ENCODE measurements at regions of chr17 and their contacts with region 1.

Region 1: DNA sequence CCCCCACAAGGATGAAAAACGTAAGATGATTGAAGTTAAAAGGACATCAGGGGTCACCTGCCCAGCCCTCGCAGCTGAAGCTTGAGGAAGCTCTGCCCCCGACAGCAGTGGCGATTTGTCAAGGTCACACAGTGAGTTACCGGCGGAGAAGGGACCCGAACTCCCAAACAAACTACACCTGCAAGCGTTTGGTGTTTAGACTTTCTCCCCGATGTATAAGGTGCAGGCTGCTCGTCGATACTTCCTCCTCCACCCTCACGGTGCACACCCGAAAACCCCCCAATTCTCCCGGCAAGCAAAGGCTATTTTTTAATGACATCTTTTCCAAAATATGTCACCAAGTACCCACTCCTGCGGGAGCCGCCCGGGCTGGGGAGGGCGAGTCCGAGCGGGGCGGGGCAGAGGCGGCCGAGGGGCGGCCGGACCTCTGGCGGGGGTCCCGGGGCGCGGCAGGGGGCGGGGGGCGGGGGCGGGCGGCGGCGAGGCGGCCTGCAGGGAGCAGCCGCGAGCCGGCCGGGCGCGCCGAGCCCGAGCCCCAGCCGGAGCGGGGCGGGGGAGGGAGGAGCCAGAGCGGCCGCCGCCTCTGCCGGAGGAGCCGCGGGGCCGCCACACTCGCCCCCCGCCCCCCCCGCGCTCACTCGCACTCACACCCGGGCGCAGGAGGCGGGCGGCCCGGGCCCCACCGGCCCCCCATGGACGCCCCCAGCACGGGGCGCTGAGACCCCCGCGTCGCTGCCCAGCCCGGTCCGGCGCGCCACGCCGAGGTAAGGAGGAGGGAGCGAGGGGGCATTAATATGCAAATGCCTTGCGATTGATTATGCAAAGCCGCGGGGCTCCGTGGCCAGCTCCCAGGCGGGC is at the start of gene THRA:
- DNase-seq: peak; percentile 71 to 75 (median 73)
- H3K4me3 ChIP-seq: peak within 1 kb of the TSS; percentile 57 to 70
- H3K4me3 Mint-ChIP-seq: peak within 1 kb of the TSS; percentile 90 to 96 (median 94)
- H3K27ac ChIP-seq: peak within 1 kb of the TSS; percentile 70
- H3K27ac Mint-ChIP-seq: peak within 1 kb of the TSS; percentile 81 to 96 (median 91)
- H3K4me1 ChIP-seq: peaks cover 49% of the 10 kb centered on the region
- H3K4me1 Mint-ChIP-seq: peaks cover 33 to 53% (median 42%) of the 10 kb centered on the region in 4 donors
- H3K27me3 ChIP-seq: peaks cover 3% of the 10 kb centered on the region
- H3K27me3 Mint-ChIP-seq: peaks cover 1% of the 10 kb centered on the region in 2 donors
- total RNA-seq, gene THRA: 35.9 to 41.3 TPM

Region 2: DNA sequence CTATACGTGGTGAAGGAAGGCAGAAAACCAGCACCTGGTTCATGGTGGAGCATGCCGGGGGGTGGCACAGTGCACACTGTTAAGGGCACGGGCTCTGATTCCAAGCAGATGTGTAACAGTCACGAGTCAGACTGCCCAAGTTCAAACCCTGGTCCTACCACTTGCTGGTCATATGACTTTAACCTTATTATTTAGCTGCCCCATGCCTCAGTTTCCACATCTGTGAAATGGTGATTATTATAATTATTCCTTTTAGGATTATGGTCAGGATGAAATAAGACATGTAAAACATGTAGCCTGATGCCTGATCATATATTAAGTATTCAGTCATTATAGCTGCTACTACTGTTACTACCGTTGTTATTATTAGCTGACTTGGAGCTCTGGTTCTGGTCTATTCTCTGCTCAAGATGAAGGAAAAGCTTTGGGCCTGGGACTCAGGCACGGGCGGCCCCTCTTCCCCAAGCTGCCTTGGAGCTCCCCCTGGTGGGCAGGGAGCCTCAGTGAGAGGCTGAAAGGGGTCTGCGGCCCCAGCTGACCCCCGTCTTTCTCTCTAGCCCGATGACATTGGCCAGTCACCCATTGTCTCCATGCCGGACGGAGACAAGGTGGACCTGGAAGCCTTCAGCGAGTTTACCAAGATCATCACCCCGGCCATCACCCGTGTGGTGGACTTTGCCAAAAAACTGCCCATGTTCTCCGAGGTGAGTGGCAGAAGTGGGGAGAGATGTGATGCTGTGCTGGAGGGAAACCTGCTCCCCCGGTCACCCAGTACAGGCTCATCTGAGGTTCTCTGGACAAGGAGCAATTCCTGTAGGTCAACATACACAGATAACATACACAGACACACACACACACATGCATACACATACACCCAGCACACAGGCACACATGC is 23.8 kb after region 1 on chr17:
- CTCF ChIA-PET with region 1: interaction called, 15 read pairs
- POLR2A ChIA-PET with region 1: interaction called, 304 read pairs
- intact Hi-C with region 1: loop called (anchors 1 kb)
- DNase-seq: peak in 3 of 5 donors; percentile 40 to 52 (median 50)
- H3K4me3 ChIP-seq: no peak overlapping the region
- H3K4me3 Mint-ChIP-seq: no peak overlapping the region
- H3K27ac ChIP-seq: no peak overlapping the region
- H3K27ac Mint-ChIP-seq: peak overlapping the region in 4 of 7 donors; percentile 1 to 77 (median 60)
- H3K4me1 ChIP-seq: peaks cover 5% of the 10 kb centered on the region
- H3K4me1 Mint-ChIP-seq: peaks cover 6 to 23% (median 10%) of the 10 kb centered on the region in 4 donors
- H3K27me3 ChIP-seq: no peaks in the 10 kb centered on the region
- H3K27me3 Mint-ChIP-seq: no peaks in the 10 kb centered on the region

Region 3: GRCh38 chr17:40107522-40108174 is 45.1 kb after region 1 on chr17:
- CTCF ChIA-PET with region 1: interaction called, 543 read pairs
- POLR2A ChIA-PET with region 1: interaction called, 304 read pairs
- intact Hi-C with region 1: no loop called
- DNase-seq: peak in 1 of 5 donors; percentile 57
- H3K4me3 ChIP-seq: peak overlapping the region in 1 of 2 donors; percentile 1
- H3K4me3 Mint-ChIP-seq: peak overlapping the region; percentile 56 to 81 (median 76)
- H3K27ac ChIP-seq: peak overlapping the region; percentile 85
- H3K27ac Mint-ChIP-seq: peak overlapping the region; percentile 97 to 100 (median 98)
- H3K4me1 ChIP-seq: peaks cover 100% of the 10 kb centered on the region
- H3K4me1 Mint-ChIP-seq: peaks cover 83 to 100% (median 93%) of the 10 kb centered on the region in 4 donors
- H3K27me3 ChIP-seq: no peaks in the 10 kb centered on the region
- H3K27me3 Mint-ChIP-seq: no peaks in the 10 kb centered on the region